Adrenal gland (tissue), 19 donors: ENCODE measurements at regions of chr15 and their contacts with region 1.

Region 1: GRCh38 chr15:63553388-63553791 is 43.8 kb upstream of the FBXL22 start:
- DNase-seq: peak in 6 of 7 donors; percentile 60 to 73 (median 68)
- H3K4me3 ChIP-seq: peak overlapping the region in 1 of 4 donors; percentile 27
- H3K27ac ChIP-seq: peak overlapping the region in 4 of 5 donors; percentile 7 to 80 (median 48)
- H3K4me1 ChIP-seq: peaks cover 19 to 28% of the 10 kb centered on the region in 2 donors
- H3K27me3 ChIP-seq: no peaks in the 10 kb centered on the region
- CTCF ChIP-seq: no peak
- POLR2A ChIP-seq: no peak

Region 2: GRCh38 chr15:63166219-63166618 is 387.2 kb before region 1 on chr15:
- intact Hi-C with region 1: no loop called
- DNase-seq: no peak
- H3K4me3 ChIP-seq: no peak overlapping the region
- H3K27ac ChIP-seq: no peak overlapping the region
- H3K4me1 ChIP-seq: no peaks in the 10 kb centered on the region
- H3K27me3 ChIP-seq: no peaks in the 10 kb centered on the region
- CTCF ChIP-seq: peak in 2 of 6 experiments; percentile 8 to 23
- POLR2A ChIP-seq: no peak

Region 3: DNA sequence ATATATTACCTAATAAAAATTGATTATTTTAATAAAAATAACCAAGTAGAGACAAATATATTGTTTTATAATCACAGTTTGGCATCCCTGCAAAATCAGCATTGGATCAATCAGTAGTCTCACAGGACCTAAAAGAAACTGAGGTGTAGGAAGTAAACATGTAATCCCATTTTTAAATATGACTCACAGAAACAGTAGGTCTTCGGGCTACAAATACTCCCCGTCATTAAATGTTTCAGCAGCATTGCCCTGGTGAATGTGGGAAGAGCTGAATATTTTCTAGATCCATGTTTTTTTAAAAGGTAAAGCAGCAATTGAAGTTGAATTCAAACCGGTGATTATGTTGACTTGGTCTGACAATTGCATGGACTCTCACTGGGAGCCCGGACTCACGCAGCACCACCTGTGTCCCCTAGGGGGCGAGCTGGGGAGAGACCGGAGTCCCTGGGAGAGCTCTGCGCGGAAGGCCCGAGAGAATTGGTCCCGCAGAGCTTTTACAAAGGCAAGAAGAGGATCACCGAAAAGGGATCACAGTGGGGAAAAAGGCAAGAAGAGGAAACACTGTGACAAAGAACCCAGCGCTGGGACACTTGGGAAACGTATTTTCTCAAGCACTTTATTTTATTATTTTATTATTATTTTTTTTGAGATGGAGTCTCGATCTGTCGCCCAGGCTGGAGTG is 66.2 kb before region 1 on chr15:
- intact Hi-C with region 1: no loop called
- DNase-seq: peak; percentile 83 to 95 (median 91)
- H3K4me3 ChIP-seq: no peak overlapping the region
- H3K27ac ChIP-seq: no peak overlapping the region
- H3K4me1 ChIP-seq: peaks cover 0 to 9% of the 10 kb centered on the region in 2 donors
- H3K27me3 ChIP-seq: no peaks in the 10 kb centered on the region
- CTCF ChIP-seq: peak; percentile 82 to 94 (median 84)
- POLR2A ChIP-seq: no peak

Region 4: DNA sequence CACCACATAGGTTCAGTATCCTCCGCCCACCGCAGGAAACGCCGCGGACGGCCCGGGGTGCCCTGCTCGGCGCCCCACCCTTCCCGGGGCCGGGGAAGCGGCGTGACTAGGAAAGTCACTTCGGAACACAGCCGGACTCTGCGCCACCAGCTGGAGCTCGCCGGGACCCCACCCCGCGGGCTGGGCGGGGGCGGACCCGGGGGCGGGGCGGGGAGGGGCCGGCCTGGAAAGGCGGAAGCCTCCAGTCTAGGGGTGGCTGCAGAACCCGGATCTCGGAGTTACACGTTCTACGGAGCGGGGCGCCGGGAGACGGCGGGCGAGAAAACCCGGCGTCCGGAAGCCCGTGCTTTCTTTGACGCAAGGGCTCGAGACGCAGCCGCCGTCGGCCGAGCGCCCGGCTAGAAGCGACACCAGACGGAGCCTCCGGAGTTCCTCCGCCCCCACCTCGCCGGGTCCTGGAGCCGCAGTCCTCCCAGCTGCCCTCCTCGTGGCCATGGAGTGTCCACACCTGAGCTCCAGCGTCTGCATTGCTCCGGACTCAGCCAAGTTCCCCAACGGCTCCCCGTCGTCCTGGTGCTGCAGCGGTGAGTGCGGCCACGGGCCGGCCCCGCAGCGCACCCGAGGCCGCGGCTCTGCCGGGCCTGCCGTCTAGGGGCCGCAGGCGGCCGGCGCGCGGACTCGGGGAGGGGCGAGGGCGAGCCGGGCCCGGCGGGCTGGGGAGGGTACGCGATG is 49.0 kb before region 1 on chr15 and contains the start of gene USP3:
- intact Hi-C with region 1: loop called in 1 of 2 experiments (anchors 10 kb)
- DNase-seq: peak; percentile 94 to 97 (median 96)
- H3K4me3 ChIP-seq: peak within 1 kb of the TSS; percentile 58 to 97 (median 70)
- H3K27ac ChIP-seq: peak within 1 kb of the TSS; percentile 98 to 100 (median 100)
- H3K4me1 ChIP-seq: peaks cover 30 to 59% of the 10 kb centered on the region in 2 donors
- H3K27me3 ChIP-seq: no peaks in the 10 kb centered on the region
- CTCF ChIP-seq: peak; percentile 20 to 49 (median 39)
- POLR2A ChIP-seq: peak; percentile 93 to 94
- total RNA-seq, gene USP3: 26.4 to 55.0 (median 42.2) TPM